Transverse colon (tissue), 4 donors: ENCODE measurements at regions of chr15 and their contacts with region 1.

Region 1: GRCh38 chr15:32849769-32850668 is 132.2 kb downstream of the GREM1 start:
- DNase-seq: no peak
- H3K4me3 ChIP-seq: no peak overlapping the region
- H3K27ac ChIP-seq: no peak overlapping the region
- H3K4me1 ChIP-seq: no peaks in the 10 kb centered on the region
- H3K27me3 ChIP-seq: no peaks in the 10 kb centered on the region
- CTCF ChIP-seq: no peak
- EP300 ChIP-seq: no peak
- POLR2A ChIP-seq: no peak

Region 2: DNA sequence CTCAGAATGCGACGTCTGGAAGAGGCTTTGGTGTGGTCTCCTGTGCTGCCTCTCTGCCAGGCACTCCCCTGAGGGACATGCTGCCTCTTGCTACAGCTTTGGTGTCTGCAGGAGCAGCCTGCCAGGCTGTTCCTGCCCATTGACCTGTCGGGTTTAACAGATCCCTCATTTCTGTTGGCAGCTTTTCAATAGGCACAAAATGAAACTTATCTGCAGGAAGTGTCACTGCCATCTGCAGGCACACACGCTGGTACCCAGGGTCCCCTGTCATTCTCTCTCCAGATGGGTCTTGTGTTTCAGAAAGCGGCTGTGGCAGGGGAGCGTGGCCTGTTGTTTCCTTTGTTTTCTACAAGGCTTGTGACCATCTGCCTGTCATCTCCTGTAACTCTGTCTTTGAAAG is 790.0 kb after region 1 on chr15:
- in situ Hi-C with region 1: no loop called
- intact Hi-C with region 1: no loop called
- DNase-seq: no peak
- H3K4me3 ChIP-seq: no peak overlapping the region
- H3K27ac ChIP-seq: no peak overlapping the region
- H3K4me1 ChIP-seq: no peaks in the 10 kb centered on the region
- H3K27me3 ChIP-seq: no peaks in the 10 kb centered on the region
- CTCF ChIP-seq: no peak
- EP300 ChIP-seq: no peak
- POLR2A ChIP-seq: no peak

Region 3: DNA sequence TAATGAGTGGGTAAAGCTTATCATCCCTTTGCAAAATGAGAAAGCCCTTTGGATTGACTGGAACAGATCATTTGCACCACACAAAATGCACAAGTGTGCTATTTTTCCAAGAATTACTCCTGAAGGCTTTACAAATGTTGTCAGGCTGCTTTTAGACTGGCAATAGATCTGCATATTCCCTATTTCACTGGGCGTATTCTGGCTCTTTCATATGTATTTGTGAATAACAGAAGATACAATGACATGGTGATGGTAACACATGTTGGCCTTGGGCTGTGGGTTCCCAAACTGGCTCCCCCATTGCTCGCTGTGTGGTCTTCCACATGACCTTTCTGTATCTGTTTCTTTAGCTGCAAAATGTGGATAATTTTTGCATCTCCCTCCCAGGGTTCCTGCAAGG is 814.9 kb after region 1 on chr15:
- in situ Hi-C with region 1: no loop called
- intact Hi-C with region 1: loop called (anchors 5 kb)
- DNase-seq: no peak
- H3K4me3 ChIP-seq: no peak overlapping the region
- H3K27ac ChIP-seq: no peak overlapping the region
- H3K4me1 ChIP-seq: no peaks in the 10 kb centered on the region
- H3K27me3 ChIP-seq: no peaks in the 10 kb centered on the region
- CTCF ChIP-seq: no peak
- EP300 ChIP-seq: no peak
- POLR2A ChIP-seq: no peak